ENCODE measurements at regions of chr10 and their contacts with region 1.

Region 1: GRCh38 chr10:17101257-17101909 is 28.2 kb downstream of the CUBN start:
- DNase-seq: peak; percentile 40
- H3K4me3 Mint-ChIP-seq: no peak overlapping the region
- H3K27ac Mint-ChIP-seq: peak overlapping the region; percentile 50
- H3K4me1 Mint-ChIP-seq: peaks cover 32% of the 10 kb centered on the region
- H3K27me3 Mint-ChIP-seq: no peaks in the 10 kb centered on the region
- CTCF ChIP-seq: no peak

Region 2: GRCh38 chr10:16975188-16975587 is 126.2 kb before region 1 on chr10:
- CTCF ChIA-PET with region 1: no interaction called
- intact Hi-C with region 1: no loop called
- DNase-seq: no peak
- H3K4me3 Mint-ChIP-seq: no peak overlapping the region
- H3K27ac Mint-ChIP-seq: no peak overlapping the region
- H3K4me1 Mint-ChIP-seq: no peaks in the 10 kb centered on the region
- H3K27me3 Mint-ChIP-seq: no peaks in the 10 kb centered on the region
- CTCF ChIP-seq: no peak

Region 3: DNA sequence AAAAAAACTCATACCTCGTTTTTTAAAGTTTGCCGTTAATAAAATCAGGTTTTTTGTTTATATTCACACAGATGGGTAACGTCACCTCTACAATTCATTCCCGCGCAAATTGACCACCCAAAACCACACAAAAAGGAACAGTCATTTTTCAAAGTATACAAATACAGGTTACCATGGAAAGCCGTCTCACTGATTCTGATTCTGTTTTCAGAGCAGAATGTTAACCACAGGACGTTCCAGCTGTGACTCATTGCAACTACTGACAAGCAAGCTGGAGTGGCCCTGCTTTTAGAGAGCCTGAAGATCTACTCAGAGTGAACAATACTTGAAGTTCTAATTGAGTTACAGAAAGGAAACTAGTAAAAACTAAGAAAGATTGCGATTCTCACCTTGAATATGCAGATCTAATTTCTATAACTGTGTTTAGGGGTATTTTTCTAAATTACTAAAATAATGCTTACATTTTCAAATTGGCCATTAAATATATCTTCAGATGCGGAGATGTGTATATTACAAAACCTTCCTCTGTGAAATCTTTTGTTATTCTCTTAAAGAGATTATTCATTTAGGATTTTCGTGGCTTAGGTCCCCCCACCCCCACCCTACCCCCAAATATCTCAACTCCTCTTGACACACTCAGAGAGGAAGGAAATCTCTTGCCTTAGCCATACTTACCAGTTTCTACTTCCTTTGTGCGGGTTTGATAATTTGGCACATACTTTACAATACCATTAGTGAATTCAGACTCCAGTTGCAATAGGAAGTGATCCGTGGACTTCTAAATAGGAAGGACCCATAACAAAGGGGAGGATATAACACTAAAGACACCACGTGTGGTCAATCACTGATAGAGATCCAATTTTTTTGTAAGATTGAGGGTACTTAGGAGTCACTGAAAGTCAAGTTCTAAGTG is 77.7 kb before region 1 on chr10:
- CTCF ChIA-PET with region 1: no interaction called
- intact Hi-C with region 1: loop called (anchors 5 kb)
- DNase-seq: peak; percentile 61
- H3K4me3 Mint-ChIP-seq: no peak overlapping the region
- H3K27ac Mint-ChIP-seq: peak overlapping the region; percentile 21
- H3K4me1 Mint-ChIP-seq: peaks cover 8% of the 10 kb centered on the region
- H3K27me3 Mint-ChIP-seq: no peaks in the 10 kb centered on the region
- CTCF ChIP-seq: no peak